Panc1 (cell line): ENCODE measurements at regions of chr2 and their contacts with region 1.

Region 1: GRCh38 chr2:215299337-215299859 is 12.5 kb upstream of the ATIC start:
- DNase-seq: no peak
- ATAC-seq: no peak
- H3K4me3 ChIP-seq: no peak overlapping the region
- H3K27ac ChIP-seq: no peak overlapping the region
- H3K4me1 ChIP-seq: no peaks in the 10 kb centered on the region; the same call in 1 of the 2 replicates
- H3K27me3 ChIP-seq: no peaks in the 10 kb centered on the region
- CTCF ChIP-seq: no peak

Region 2: GRCh38 chr2:214180071-214180470 is 1119.3 kb before region 1 on chr2:
- CTCF ChIA-PET with region 1: no interaction called
- POLR2A ChIA-PET with region 1: interaction called, 12 read pairs
- in situ Hi-C with region 1: no loop called
- intact Hi-C with region 1: no loop called
- DNase-seq: no peak
- ATAC-seq: no peak
- H3K4me3 ChIP-seq: no peak overlapping the region
- H3K27ac ChIP-seq: no peak overlapping the region
- H3K4me1 ChIP-seq: no peaks in the 10 kb centered on the region
- H3K27me3 ChIP-seq: no peaks in the 10 kb centered on the region
- CTCF ChIP-seq: no peak

Region 3: GRCh38 chr2:215269397-215270119 is 29.8 kb before region 1 on chr2:
- CTCF ChIA-PET with region 1: no interaction called
- POLR2A ChIA-PET with region 1: no interaction called
- in situ Hi-C with region 1: no loop called
- intact Hi-C with region 1: no loop called
- DNase-seq: peak; percentile 47
- ATAC-seq: no peak
- H3K4me3 ChIP-seq: no peak overlapping the region
- H3K27ac ChIP-seq: no peak overlapping the region
- H3K4me1 ChIP-seq: no peaks in the 10 kb centered on the region; the same call in 1 of the 2 replicates
- H3K27me3 ChIP-seq: no peaks in the 10 kb centered on the region
- CTCF ChIP-seq: peak; percentile 90

Region 4: GRCh38 chr2:215356948-215357461 is 57.6 kb after region 1 on chr2:
- CTCF ChIA-PET with region 1: no interaction called
- POLR2A ChIA-PET with region 1: no interaction called
- in situ Hi-C with region 1: no loop called
- intact Hi-C with region 1: no loop called
- DNase-seq: no peak
- ATAC-seq: no peak
- H3K4me3 ChIP-seq: no peak overlapping the region
- H3K27ac ChIP-seq: no peak overlapping the region
- H3K4me1 ChIP-seq: no peaks in the 10 kb centered on the region
- H3K27me3 ChIP-seq: no peaks in the 10 kb centered on the region
- CTCF ChIP-seq: no peak